A673 (cell line): ENCODE measurements at regions of chr6 and their contacts with region 1.

Region 1: DNA sequence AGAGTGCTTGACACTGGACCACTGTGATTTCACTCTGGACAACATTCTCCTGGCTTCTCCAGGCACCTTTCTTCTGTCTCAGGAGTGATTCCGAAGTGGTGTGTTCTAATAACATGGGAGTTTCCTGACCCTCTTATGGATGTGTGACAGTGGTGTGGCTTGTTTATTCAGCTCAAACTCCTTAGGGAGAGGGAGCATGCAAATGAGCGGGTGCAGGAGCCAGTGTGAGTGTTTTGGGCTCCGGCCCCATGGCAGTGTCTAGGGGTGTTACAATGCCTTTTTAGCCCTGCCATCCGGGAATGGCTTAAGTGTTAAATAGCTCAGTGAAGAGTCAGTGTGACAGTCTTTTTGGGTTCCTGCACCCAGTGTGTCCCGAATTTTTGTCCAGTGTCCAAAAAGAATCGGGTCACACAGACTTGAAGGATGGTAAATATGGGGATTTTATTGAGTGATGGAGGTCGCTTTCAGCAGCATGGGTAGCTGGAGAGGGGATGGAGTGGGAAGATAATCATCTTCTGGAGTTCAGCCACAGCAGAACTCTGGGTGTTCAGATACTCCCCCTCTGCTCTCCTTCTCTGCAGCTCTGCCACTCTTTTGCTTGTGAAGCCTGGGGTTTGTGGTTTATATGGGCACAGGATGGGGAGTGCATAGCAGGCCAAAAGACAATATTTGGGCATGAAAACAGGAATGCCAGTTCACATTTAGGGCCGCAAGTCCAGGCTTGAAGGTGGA is 928.9 kb upstream of the CITED2 start:
- DNase-seq: no peak
- H3K4me3 ChIP-seq: no peak overlapping the region
- H3K27ac ChIP-seq: no peak overlapping the region
- H3K4me1 ChIP-seq: peaks cover 7% of the 10 kb centered on the region
- H3K27me3 ChIP-seq: no peaks in the 10 kb centered on the region
- CTCF ChIP-seq: no peak

Region 2: GRCh38 chr6:140344142-140344913 is 40.9 kb after region 1 on chr6:
- CTCF ChIA-PET with region 1: no interaction called
- POLR2A ChIA-PET with region 1: interaction called, 25 read pairs
- intact Hi-C with region 1: no loop called
- DNase-seq: no peak
- H3K4me3 ChIP-seq: no peak overlapping the region
- H3K27ac ChIP-seq: no peak overlapping the region
- H3K4me1 ChIP-seq: no peaks in the 10 kb centered on the region
- H3K27me3 ChIP-seq: no peaks in the 10 kb centered on the region
- CTCF ChIP-seq: no peak

Region 3: GRCh38 chr6:140586426-140587061 is 283.2 kb after region 1 on chr6:
- CTCF ChIA-PET with region 1: no interaction called
- POLR2A ChIA-PET with region 1: no interaction called
- intact Hi-C with region 1: no loop called
- DNase-seq: no peak
- H3K4me3 ChIP-seq: no peak overlapping the region
- H3K27ac ChIP-seq: no peak overlapping the region
- H3K4me1 ChIP-seq: no peaks in the 10 kb centered on the region
- H3K27me3 ChIP-seq: no peaks in the 10 kb centered on the region
- CTCF ChIP-seq: no peak

Region 4: DNA sequence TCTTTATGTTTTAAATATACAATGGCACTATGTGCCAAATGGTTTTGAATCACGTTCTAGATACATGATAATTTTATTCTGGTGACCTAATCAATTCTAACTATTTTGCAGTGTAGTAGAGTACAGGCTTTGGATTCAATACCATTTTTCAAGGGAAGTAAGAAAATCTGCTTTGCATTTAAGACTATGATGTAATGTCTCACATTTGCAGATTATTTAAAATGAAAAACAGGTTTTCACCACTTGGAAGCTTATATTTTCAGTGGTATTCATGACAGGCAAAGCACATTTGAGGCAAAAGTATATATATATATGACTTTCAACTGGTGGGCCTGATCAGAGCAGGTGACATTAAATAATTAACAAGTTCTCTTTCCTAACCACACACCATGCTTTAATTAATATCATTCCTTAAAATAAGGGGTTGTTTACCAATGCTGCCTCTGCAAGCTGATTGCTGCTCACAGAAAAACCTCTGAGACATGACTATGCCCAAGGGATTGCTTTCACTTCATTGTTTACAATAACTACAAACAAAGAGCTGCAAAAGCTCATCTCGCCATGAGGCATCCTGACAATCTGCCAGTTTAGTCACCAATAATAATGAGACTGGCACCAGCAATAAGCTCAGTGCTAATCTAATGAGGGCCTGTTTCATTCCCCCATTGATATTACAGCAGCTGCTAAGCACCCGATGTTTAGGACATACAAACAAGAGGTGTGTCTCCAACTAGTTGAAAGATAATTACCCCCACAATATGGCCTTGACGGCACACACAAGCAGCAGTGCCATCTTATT is 653.4 kb after region 1 on chr6:
- CTCF ChIA-PET with region 1: no interaction called
- POLR2A ChIA-PET with region 1: no interaction called
- intact Hi-C with region 1: no loop called
- DNase-seq: peak; percentile 66
- H3K4me3 ChIP-seq: no peak overlapping the region
- H3K27ac ChIP-seq: peak overlapping the region; percentile 18
- H3K4me1 ChIP-seq: peaks cover 18% of the 10 kb centered on the region
- H3K27me3 ChIP-seq: no peaks in the 10 kb centered on the region
- CTCF ChIP-seq: no peak